CD4-positive, alpha-beta memory T cell (primary cell): ENCODE measurements at regions of chr16 and their contacts with region 1.

Region 1: GRCh38 chr16:66751303-66751991 is at the start of gene DYNC1LI2:
- DNase-seq: peak; percentile 82 to 91 (median 87)
- H3K4me3 ChIP-seq: peak within 1 kb of the TSS; percentile 64 to 73
- H3K4me3 Mint-ChIP-seq: peak within 1 kb of the TSS; percentile 91 to 95 (median 93)
- H3K27ac ChIP-seq: peak within 1 kb of the TSS; percentile 85
- H3K27ac Mint-ChIP-seq: peak within 1 kb of the TSS; percentile 85 to 95 (median 94)
- H3K4me1 ChIP-seq: peaks cover 34% of the 10 kb centered on the region
- H3K4me1 Mint-ChIP-seq: peaks cover 31 to 46% (median 37%) of the 10 kb centered on the region in 4 donors
- H3K27me3 ChIP-seq: no peaks in the 10 kb centered on the region
- H3K27me3 Mint-ChIP-seq: peaks cover 0 to 4% of the 10 kb centered on the region in 2 donors
- total RNA-seq, gene DYNC1LI2: 73.2 to 78.1 TPM

Region 2: GRCh38 chr16:66270333-66270927 is 481.0 kb before region 1 on chr16:
- CTCF ChIA-PET with region 1: no interaction called
- POLR2A ChIA-PET with region 1: no interaction called
- intact Hi-C with region 1: no loop called
- DNase-seq: peak in 4 of 5 donors; percentile 41 to 59 (median 46)
- H3K4me3 ChIP-seq: no peak overlapping the region
- H3K4me3 Mint-ChIP-seq: peak overlapping the region in 3 of 8 donors; percentile 36 to 39 (median 39)
- H3K27ac ChIP-seq: no peak overlapping the region
- H3K27ac Mint-ChIP-seq: no peak overlapping the region
- H3K4me1 ChIP-seq: peaks cover 12% of the 10 kb centered on the region
- H3K4me1 Mint-ChIP-seq: peaks cover 11 to 20% (median 15%) of the 10 kb centered on the region in 4 donors
- H3K27me3 ChIP-seq: no peaks in the 10 kb centered on the region
- H3K27me3 Mint-ChIP-seq: peaks cover 27 to 36% of the 10 kb centered on the region in 2 donors

Region 3: GRCh38 chr16:66539623-66540469 is 211.6 kb before region 1 on chr16:
- CTCF ChIA-PET with region 1: no interaction called
- POLR2A ChIA-PET with region 1: no interaction called
- intact Hi-C with region 1: no loop called
- DNase-seq: no peak
- H3K4me3 ChIP-seq: no peak overlapping the region
- H3K4me3 Mint-ChIP-seq: peak overlapping the region in 7 of 8 donors; percentile 5 to 70 (median 40)
- H3K27ac ChIP-seq: no peak overlapping the region
- H3K27ac Mint-ChIP-seq: peak overlapping the region; percentile 25 to 68 (median 62)
- H3K4me1 ChIP-seq: peaks cover 19% of the 10 kb centered on the region
- H3K4me1 Mint-ChIP-seq: peaks cover 9 to 46% (median 20%) of the 10 kb centered on the region in 4 donors
- H3K27me3 ChIP-seq: no peaks in the 10 kb centered on the region
- H3K27me3 Mint-ChIP-seq: no peaks in the 10 kb centered on the region

Region 4: GRCh38 chr16:66696669-66697630 is 54.5 kb before region 1 on chr16 and contains the start of gene CMTM4:
- CTCF ChIA-PET with region 1: interaction called, 5 read pairs
- POLR2A ChIA-PET with region 1: interaction called, 4 read pairs
- intact Hi-C with region 1: loop called (anchors 2 kb)
- DNase-seq: peak; percentile 68 to 80 (median 72)
- H3K4me3 ChIP-seq: peak within 1 kb of the TSS in 1 of 2 donors; percentile 57
- H3K4me3 Mint-ChIP-seq: peak within 1 kb of the TSS; percentile 78 to 87 (median 85)
- H3K27ac ChIP-seq: peak within 1 kb of the TSS; percentile 27
- H3K27ac Mint-ChIP-seq: peak within 1 kb of the TSS in 5 of 7 donors; percentile 23 to 78 (median 66)
- H3K4me1 ChIP-seq: peaks cover 8% of the 10 kb centered on the region
- H3K4me1 Mint-ChIP-seq: peaks cover 5 to 20% (median 12%) of the 10 kb centered on the region in 4 donors
- H3K27me3 ChIP-seq: no peaks in the 10 kb centered on the region
- H3K27me3 Mint-ChIP-seq: peaks cover 0 to 5% of the 10 kb centered on the region in 2 donors
- total RNA-seq, gene CMTM4: 2.0 to 2.2 TPM

Region 5: GRCh38 chr16:66740010-66740409 is 11.4 kb before region 1 on chr16:
- CTCF ChIA-PET with region 1: interaction called, 21 read pairs
- POLR2A ChIA-PET with region 1: interaction called, 6 read pairs
- intact Hi-C with region 1: no loop called
- DNase-seq: peak in 4 of 5 donors; percentile 14 to 31 (median 28)
- H3K4me3 ChIP-seq: no peak overlapping the region
- H3K4me3 Mint-ChIP-seq: peak overlapping the region in 1 of 8 donors; percentile 47
- H3K27ac ChIP-seq: no peak overlapping the region
- H3K27ac Mint-ChIP-seq: peak overlapping the region in 5 of 7 donors; percentile 30 to 77 (median 49)
- H3K4me1 ChIP-seq: peaks cover 18% of the 10 kb centered on the region
- H3K4me1 Mint-ChIP-seq: peaks cover 13 to 24% (median 16%) of the 10 kb centered on the region in 4 donors
- H3K27me3 ChIP-seq: no peaks in the 10 kb centered on the region
- H3K27me3 Mint-ChIP-seq: no peaks in the 10 kb centered on the region

Region 6: GRCh38 chr16:66801320-66802105 is 50.1 kb after region 1 on chr16 and contains the start of gene TERB1:
- CTCF ChIA-PET with region 1: no interaction called
- POLR2A ChIA-PET with region 1: no interaction called
- intact Hi-C with region 1: no loop called
- DNase-seq: peak in 1 of 5 donors; percentile 32
- H3K4me3 ChIP-seq: no peak within 1 kb of the TSS
- H3K4me3 Mint-ChIP-seq: no peak within 1 kb of the TSS
- H3K27ac ChIP-seq: no peak within 1 kb of the TSS
- H3K27ac Mint-ChIP-seq: no peak within 1 kb of the TSS
- H3K4me1 ChIP-seq: no peaks in the 10 kb centered on the region
- H3K4me1 Mint-ChIP-seq: no peaks in the 10 kb centered on the region
- H3K27me3 ChIP-seq: no peaks in the 10 kb centered on the region
- H3K27me3 Mint-ChIP-seq: no peaks in the 10 kb centered on the region
- total RNA-seq, gene TERB1: 0.83 to 1.1 TPM

Region 7: GRCh38 chr16:66934153-66934838 is 182.8 kb after region 1 on chr16 and contains the start of gene CIAO2B:
- CTCF ChIA-PET with region 1: no interaction called
- POLR2A ChIA-PET with region 1: no interaction called
- intact Hi-C with region 1: no loop called
- DNase-seq: peak; percentile 88 to 93 (median 90)
- H3K4me3 ChIP-seq: peak within 1 kb of the TSS; percentile 88 to 98
- H3K4me3 Mint-ChIP-seq: peak within 1 kb of the TSS; percentile 93 to 100 (median 99)
- H3K27ac ChIP-seq: peak within 1 kb of the TSS; percentile 97
- H3K27ac Mint-ChIP-seq: peak within 1 kb of the TSS; percentile 97 to 99 (median 99)
- H3K4me1 ChIP-seq: peaks cover 49% of the 10 kb centered on the region
- H3K4me1 Mint-ChIP-seq: peaks cover 31 to 72% (median 51%) of the 10 kb centered on the region in 4 donors
- H3K27me3 ChIP-seq: no peaks in the 10 kb centered on the region
- H3K27me3 Mint-ChIP-seq: no peaks in the 10 kb centered on the region
- total RNA-seq, gene CIAO2B: 72.7 to 75.0 TPM